AG04449 (cell line): ENCODE measurements at regions of chrX and their contacts with region 1.

Region 1: GRCh38 chrX:130060122-130061069 is 49.9 kb downstream of the ELF4 start:
- DNase-seq: no peak
- H3K4me3 ChIP-seq: peak overlapping the region; percentile 59
- CTCF ChIP-seq: peak; percentile 84

Region 2: GRCh38 chrX:129925305-129926092 is 134.9 kb before region 1 on chrX:
- CTCF ChIA-PET with region 1: interaction called, 130 read pairs
- POLR2A ChIA-PET with region 1: interaction called, 4 read pairs
- DNase-seq: no peak
- H3K4me3 ChIP-seq: no peak overlapping the region
- CTCF ChIP-seq: peak; percentile 43

Region 3: GRCh38 chrX:129931411-129932015 is 128.9 kb before region 1 on chrX:
- CTCF ChIA-PET with region 1: interaction called, 130 read pairs
- POLR2A ChIA-PET with region 1: no interaction called
- DNase-seq: peak; percentile 40
- H3K4me3 ChIP-seq: peak overlapping the region; percentile 63
- CTCF ChIP-seq: no peak

Region 4: GRCh38 chrX:130204647-130205046 is 144.3 kb after region 1 on chrX:
- CTCF ChIA-PET with region 1: no interaction called
- POLR2A ChIA-PET with region 1: no interaction called
- DNase-seq: no peak
- H3K4me3 ChIP-seq: no peak overlapping the region
- CTCF ChIP-seq: no peak